HEK293 (cell line): ENCODE measurements at regions of chr15 and their contacts with region 1.

Region 1: DNA sequence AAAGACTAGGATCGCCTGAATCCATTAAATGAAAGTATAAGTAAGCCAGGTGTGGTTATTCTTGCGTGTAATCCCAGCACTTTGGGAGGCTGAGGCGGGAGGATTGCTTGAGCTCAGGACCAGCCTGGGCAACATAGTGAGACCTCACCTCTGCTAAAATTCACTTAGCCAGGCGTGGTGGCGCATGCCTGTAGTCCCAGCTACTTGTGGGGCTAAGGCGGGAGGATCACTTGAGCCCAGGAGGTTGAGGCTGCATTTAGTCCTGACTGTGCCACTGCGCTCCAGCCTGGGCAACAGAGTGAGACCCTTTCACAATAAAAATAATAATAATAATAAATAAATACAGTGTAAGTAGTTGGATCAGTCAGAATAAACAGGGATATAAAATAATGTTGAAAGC is 25.5 kb upstream of the HYKK start:
- H3K4me3 ChIP-seq: no peak overlapping the region
- H3K27ac ChIP-seq: no peak overlapping the region
- H3K4me1 ChIP-seq: no peaks in the 10 kb centered on the region
- CTCF ChIP-seq: no peak

Region 2: DNA sequence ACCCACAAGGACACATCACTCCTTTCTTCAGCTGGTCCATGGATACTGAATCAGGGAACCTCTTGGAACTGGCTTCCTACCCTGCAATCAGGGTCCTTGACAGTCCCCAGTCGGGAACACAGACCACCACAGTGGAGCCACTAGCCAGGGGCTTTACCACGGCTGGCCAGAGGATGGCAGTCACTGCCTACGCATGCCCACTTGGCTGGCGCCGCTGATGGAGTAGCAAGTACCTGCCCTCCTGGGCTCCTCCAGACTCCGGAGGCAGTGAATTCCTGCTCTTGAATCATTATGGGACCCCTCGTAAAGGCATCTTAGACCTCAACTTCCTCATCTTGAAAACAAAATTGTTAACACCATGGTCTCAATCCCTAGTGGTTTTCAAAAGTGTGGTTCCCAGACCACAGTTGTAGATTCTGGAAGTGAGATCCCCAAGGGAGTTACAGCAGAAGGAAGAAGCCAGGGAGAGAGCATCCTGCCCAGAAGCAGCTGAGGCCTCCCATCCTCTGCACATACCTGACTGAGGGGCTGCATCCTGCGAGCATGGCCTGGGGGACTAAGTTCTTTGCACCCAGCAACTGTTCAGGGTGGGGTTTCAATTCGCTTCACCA is 173.4 kb before region 1 on chr15:
- CTCF ChIA-PET with region 1: interaction called, 21 read pairs
- POLR2A ChIA-PET with region 1: no interaction called
- H3K4me3 ChIP-seq: no peak overlapping the region
- H3K27ac ChIP-seq: no peak overlapping the region
- H3K4me1 ChIP-seq: no peaks in the 10 kb centered on the region
- CTCF ChIP-seq: peak; percentile 91